ENCODE measurements at regions of chr5 and their contacts with region 1.

Region 1: GRCh38 chr5:115634343-115635132 is 8.7 kb upstream of the TMED7 start:
- DNase-seq: peak; percentile 56
- ATAC-seq: peak; percentile 99
- H3K4me3 ChIP-seq: peak overlapping the region; percentile 35 to 40
- H3K27ac ChIP-seq: peak overlapping the region; percentile 8; the same call in 1 of the 2 replicates
- H3K4me1 ChIP-seq: no peaks in the 10 kb centered on the region; the same call in none of the 2 replicates
- H3K27me3 ChIP-seq: peaks cover 10% of the 10 kb centered on the region; the same call in 1 of the 2 replicates
- CTCF ChIP-seq: peak; percentile 89

Region 2: GRCh38 chr5:114449860-114450421 is 1184.6 kb before region 1 on chr5:
- CTCF ChIA-PET with region 1: no interaction called
- POLR2A ChIA-PET with region 1: no interaction called
- in situ Hi-C with region 1: no loop called
- intact Hi-C with region 1: no loop called
- DNase-seq: peak; percentile 35
- ATAC-seq: peak; percentile 99
- H3K4me3 ChIP-seq: no peak overlapping the region
- H3K27ac ChIP-seq: no peak overlapping the region
- H3K4me1 ChIP-seq: no peaks in the 10 kb centered on the region; the same call in 1 of the 2 replicates
- H3K27me3 ChIP-seq: peaks cover 5% of the 10 kb centered on the region; the same call in 1 of the 2 replicates
- CTCF ChIP-seq: peak; percentile 82

Region 3: DNA sequence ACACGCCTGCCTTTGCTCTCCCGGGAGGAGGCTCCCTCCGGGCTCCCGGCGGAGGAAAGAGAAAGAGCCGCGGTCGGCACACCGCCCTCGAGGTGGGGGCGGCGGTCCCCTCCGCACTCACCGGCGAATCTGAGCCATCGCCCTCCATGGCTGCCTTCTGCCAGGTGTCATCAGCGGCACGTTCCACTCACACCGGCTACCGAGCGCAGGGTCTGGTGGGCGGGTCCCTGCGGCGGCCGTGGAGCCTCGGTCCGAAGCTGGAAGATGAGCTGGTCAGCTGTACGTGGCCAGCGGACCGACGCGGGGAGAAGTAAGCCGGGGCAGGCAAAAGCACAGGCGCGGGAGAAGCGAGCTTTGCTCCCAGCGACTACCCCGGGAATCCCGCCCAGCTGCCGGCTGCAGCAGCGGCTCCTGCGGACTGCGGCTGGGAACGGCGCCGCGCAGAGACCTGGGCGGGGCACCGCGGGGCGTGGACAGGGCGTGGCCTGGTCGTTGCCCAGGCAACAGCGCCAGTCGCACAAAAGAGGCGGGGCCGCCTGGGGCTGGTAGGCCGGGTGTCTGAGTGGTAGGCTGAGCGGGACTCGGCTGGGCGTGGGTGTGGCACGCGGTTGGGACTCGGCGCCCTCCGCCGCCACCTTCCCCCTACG is 464.9 kb before region 1 on chr5 and contains the start of gene TRIM36:
- CTCF ChIA-PET with region 1: no interaction called
- POLR2A ChIA-PET with region 1: no interaction called
- in situ Hi-C with region 1: no loop called
- intact Hi-C with region 1: no loop called
- DNase-seq: peak; percentile 53
- ATAC-seq: peak; percentile 99
- H3K4me3 ChIP-seq: peak within 1 kb of the TSS; percentile 73 to 74
- H3K27ac ChIP-seq: no peak within 1 kb of the TSS
- H3K4me1 ChIP-seq: no peaks in the 10 kb centered on the region; the same call in 1 of the 2 replicates
- H3K27me3 ChIP-seq: peaks cover 28% of the 10 kb centered on the region
- CTCF ChIP-seq: peak; percentile 43
- total RNA-seq, gene TRIM36: 1.6 TPM

Region 4: GRCh38 chr5:115514220-115514619 is 120.3 kb before region 1 on chr5:
- CTCF ChIA-PET with region 1: no interaction called
- POLR2A ChIA-PET with region 1: no interaction called
- in situ Hi-C with region 1: no loop called
- intact Hi-C with region 1: no loop called
- DNase-seq: no peak
- ATAC-seq: no peak
- H3K4me3 ChIP-seq: no peak overlapping the region
- H3K27ac ChIP-seq: no peak overlapping the region
- H3K4me1 ChIP-seq: no peaks in the 10 kb centered on the region
- H3K27me3 ChIP-seq: no peaks in the 10 kb centered on the region
- CTCF ChIP-seq: no peak

Region 5: GRCh38 chr5:115841382-115842088 is 207.0 kb after region 1 on chr5 and contains the starts of genes AP3S1 and ATG12:
- CTCF ChIA-PET with region 1: no interaction called
- POLR2A ChIA-PET with region 1: no interaction called
- in situ Hi-C with region 1: no loop called
- intact Hi-C with region 1: loop called (anchors 5 kb)
- DNase-seq: peak; percentile 94
- ATAC-seq: peak; percentile 94
- H3K4me3 ChIP-seq: peak within 1 kb of the TSS; percentile 82 to 98
- H3K27ac ChIP-seq: peak within 1 kb of the TSS; percentile 97
- H3K4me1 ChIP-seq: peaks cover 24% of the 10 kb centered on the region
- H3K27me3 ChIP-seq: no peaks in the 10 kb centered on the region
- CTCF ChIP-seq: no peak
- total RNA-seq, gene AP3S1: 88.8 TPM
- total RNA-seq, gene ATG12: 52.0 TPM

Region 6: DNA sequence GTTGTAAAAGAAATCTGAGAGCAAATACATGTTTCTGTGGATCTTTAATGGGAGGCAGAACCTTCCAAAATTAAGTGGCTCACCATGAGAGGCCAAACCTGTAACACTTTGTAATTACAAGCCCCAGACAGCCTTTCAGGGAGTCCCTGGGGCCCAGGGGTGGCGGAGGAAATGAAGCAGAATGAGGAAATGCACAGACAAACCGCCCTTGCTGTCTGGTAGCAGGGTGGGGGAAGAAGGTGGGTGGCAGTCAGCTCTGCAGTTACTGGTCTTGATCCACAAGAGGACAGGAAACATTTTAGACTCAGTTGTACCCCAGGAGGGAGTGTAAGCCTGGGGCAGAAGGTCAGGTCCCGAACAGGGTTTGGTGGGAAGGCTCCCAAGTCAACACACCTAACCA is 404.3 kb after region 1 on chr5:
- CTCF ChIA-PET with region 1: no interaction called
- POLR2A ChIA-PET with region 1: no interaction called
- in situ Hi-C with region 1: no loop called
- intact Hi-C with region 1: loop called (anchors 2 kb)
- DNase-seq: no peak
- ATAC-seq: no peak
- H3K4me3 ChIP-seq: no peak overlapping the region
- H3K27ac ChIP-seq: no peak overlapping the region
- H3K4me1 ChIP-seq: no peaks in the 10 kb centered on the region
- H3K27me3 ChIP-seq: peaks cover 7% of the 10 kb centered on the region; the same call in 1 of the 2 replicates
- CTCF ChIP-seq: no peak

Region 7: DNA sequence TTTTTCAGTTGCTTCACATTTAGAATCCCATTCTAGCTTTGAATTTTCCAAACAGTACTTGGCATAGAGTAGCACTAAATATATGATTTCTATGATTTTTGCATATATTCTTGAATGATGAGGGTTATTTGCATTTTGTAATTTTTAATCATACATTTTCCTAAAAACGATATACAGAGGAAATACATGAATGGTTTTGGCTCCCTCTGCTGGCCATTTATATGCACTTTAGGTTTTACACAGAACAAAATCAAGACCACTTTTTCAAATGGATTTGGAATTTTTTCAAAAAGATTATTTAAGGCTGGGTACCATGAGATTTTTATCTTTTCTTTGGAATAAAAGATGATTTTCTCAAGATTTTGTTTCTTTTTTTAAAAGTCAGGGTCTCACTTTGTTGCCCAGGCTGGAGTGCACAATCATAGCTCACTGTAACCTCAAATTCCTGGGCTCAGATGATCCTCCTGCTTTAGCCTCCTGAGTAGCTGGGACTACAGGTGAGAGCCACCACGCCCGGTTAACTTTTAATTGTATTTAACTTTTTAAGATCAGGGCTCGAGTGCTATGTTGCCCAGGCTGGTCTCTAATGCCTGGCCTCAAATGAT is 433.6 kb after region 1 on chr5:
- CTCF ChIA-PET with region 1: no interaction called
- POLR2A ChIA-PET with region 1: no interaction called
- in situ Hi-C with region 1: no loop called
- intact Hi-C with region 1: loop called (anchors 1 kb)
- DNase-seq: no peak
- ATAC-seq: peak; percentile 80
- H3K4me3 ChIP-seq: no peak overlapping the region
- H3K27ac ChIP-seq: no peak overlapping the region
- H3K4me1 ChIP-seq: no peaks in the 10 kb centered on the region
- H3K27me3 ChIP-seq: peaks cover 2% of the 10 kb centered on the region; the same call in 1 of the 2 replicates
- CTCF ChIP-seq: peak; percentile 78

Region 8: GRCh38 chr5:116097301-116097700 is 462.8 kb after region 1 on chr5:
- CTCF ChIA-PET with region 1: no interaction called
- POLR2A ChIA-PET with region 1: no interaction called
- in situ Hi-C with region 1: no loop called
- intact Hi-C with region 1: no loop called
- DNase-seq: no peak
- ATAC-seq: no peak
- H3K4me3 ChIP-seq: no peak overlapping the region
- H3K27ac ChIP-seq: no peak overlapping the region
- H3K4me1 ChIP-seq: no peaks in the 10 kb centered on the region
- H3K27me3 ChIP-seq: no peaks in the 10 kb centered on the region
- CTCF ChIP-seq: no peak

Measured in Panc1 (cell line).